Posterior cingulate gyrus (tissue), 11 donors: ENCODE measurements at regions of chr10 and their contacts with region 1.

Region 1: GRCh38 chr10:63629363-63630084 is 108.3 kb downstream of the REEP3 start:
- DNase-seq: peak; percentile 89 to 99 (median 94)

Region 2: GRCh38 chr10:63166742-63167258 is 462.7 kb before region 1 on chr10:
- intact Hi-C with region 1: loop called (anchors 2 kb)
- DNase-seq: peak in 1 of 10 donors; percentile 13

Region 3: GRCh38 chr10:63217120-63217605 is 412.4 kb before region 1 on chr10:
- intact Hi-C with region 1: loop called (anchors 2 kb)
- DNase-seq: no peak

Region 4: DNA sequence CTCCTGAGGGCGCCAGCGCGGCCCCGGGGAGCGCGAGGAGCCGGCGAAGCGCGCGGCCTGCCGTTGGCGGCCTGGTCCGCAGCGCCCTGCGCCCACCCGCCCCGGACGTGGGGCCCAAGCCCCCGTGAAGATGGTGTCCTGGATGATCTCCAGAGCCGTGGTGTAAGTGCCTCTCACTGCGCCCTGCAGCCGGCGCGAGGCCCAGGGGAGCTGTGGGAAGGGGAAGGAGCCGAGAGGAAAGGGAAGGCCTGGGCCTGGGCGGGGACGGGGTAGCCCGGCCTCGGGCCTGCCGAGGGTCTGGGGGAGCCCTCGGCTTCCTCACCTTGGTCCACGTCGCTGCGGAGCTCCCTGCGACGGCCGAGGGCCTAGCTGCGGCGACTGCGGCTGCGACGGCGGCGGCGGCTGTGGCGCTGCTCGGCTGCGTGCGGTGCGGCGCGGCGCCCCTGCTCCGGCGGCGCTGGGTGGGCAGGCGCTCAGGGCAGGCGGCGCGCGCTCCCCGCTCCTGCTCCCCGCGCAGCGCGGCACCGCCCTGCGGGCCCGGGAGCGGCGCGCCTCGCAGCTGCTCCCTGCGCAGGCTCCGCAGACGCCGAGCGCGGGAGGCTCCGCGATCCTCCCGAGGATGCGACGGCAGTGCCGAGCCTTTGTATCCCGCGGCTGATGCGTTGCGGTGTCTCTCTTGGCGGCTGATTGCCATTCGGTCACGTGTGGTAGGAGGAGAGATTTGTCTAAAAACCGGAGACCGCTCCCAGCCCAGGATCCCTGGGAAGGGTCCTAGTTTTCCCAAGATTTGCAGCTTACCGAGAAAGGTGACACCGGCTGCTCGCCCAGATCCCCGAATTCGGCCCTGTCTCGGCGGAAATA is 107.9 kb before region 1 on chr10:
- intact Hi-C with region 1: loop called (anchors 2 kb)
- DNase-seq: peak; percentile 57 to 96 (median 72)

Region 5: GRCh38 chr10:63711867-63712716 is 82.6 kb after region 1 on chr10:
- intact Hi-C with region 1: loop called (anchors 2 kb)
- DNase-seq: peak; percentile 51 to 93 (median 63)